Heart left ventricle (tissue), 16 donors: ENCODE measurements at regions of chr12 and their contacts with region 1.

Region 1: DNA sequence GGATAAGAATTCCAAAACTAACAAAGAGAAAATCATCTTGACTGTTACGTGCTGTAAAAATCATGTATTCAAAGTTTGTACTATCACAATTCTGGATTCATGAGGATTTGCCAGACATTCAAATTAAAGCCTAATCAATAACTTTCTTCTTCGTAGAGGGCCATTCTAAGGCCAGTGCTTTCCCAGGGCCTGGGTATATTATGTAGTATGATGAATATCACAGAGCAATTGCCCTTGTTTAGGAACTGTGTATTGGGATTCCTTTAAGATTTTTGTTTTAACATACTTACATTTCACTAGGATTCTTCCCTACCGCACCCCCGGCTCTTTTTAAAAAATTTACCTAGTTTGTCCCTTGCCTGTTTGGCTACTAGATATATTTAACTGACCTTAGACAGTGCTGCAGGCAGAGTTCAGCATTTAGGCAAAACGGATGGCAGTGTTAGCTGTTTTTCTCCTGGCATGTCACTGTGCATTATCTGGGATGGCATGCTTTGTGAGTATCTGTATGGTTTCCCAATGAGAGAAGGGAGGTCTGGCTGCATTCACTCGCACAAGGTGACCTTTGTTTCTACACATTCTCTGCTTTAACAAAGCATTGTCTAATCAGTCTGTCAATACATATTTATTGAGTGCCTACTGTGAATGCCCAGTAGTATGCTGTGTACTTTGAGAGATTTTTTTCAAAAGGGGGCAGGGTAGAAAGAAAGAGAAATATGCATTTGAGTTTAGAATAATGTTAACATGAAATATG is 63.3 kb downstream of the ERC1 start:
- DNase-seq: peak in 1 of 5 donors; percentile 10
- ATAC-seq: peak; percentile 63 to 86 (median 80)
- H3K4me3 ChIP-seq: peak overlapping the region in 2 of 12 donors; percentile 8 to 9
- H3K27ac ChIP-seq: peak overlapping the region in 11 of 12 donors; percentile 15 to 71 (median 55)
- H3K4me1 ChIP-seq: peaks cover 0 to 21% (median 13%) of the 10 kb centered on the region in 12 donors
- H3K27me3 ChIP-seq: no peaks in the 10 kb centered on the region
- CTCF ChIP-seq: no peak
- POLR2A ChIP-seq: no peak

Region 2: GRCh38 chr12:1073652-1074051 is 19.4 kb after region 1 on chr12:
- intact Hi-C with region 1: loop called in 1 of 10 experiments (anchors 2 kb)
- DNase-seq: no peak
- ATAC-seq: no peak
- H3K4me3 ChIP-seq: no peak overlapping the region
- H3K27ac ChIP-seq: no peak overlapping the region
- H3K4me1 ChIP-seq: peaks cover 0 to 28% (median 13%) of the 10 kb centered on the region in 12 donors
- H3K27me3 ChIP-seq: no peaks in the 10 kb centered on the region
- CTCF ChIP-seq: no peak
- POLR2A ChIP-seq: no peak

Region 3: DNA sequence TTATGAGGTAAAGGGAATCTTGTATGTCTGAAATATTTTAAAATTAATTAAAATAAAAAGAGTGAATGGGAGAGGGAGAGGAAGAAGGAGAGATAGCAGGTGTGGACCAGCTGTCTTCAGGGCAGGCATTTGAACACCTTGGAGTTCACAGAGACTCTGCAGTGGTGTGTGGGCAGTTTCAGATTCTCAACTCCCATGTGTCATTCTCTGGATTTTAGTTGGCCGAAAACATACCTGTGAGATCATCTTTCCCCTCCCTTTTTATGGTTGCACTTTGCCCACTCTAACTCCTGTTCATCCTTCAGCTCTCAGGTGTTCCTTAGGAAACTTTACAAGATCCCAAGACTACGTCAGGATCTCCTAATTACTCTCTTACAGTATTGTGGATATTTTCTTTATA is 44.9 kb after region 1 on chr12:
- intact Hi-C with region 1: no loop called
- DNase-seq: no peak
- ATAC-seq: no peak
- H3K4me3 ChIP-seq: no peak overlapping the region
- H3K27ac ChIP-seq: no peak overlapping the region
- H3K4me1 ChIP-seq: peaks cover 0 to 14% (median 0%) of the 10 kb centered on the region in 12 donors
- H3K27me3 ChIP-seq: no peaks in the 10 kb centered on the region
- CTCF ChIP-seq: no peak
- POLR2A ChIP-seq: no peak